ENCODE measurements at regions of chr1 and their contacts with region 1.

Region 1: GRCh38 chr1:89698624-89699023 is 65.7 kb downstream of the LRRC8C start:
- DNase-seq: no peak
- ATAC-seq: no peak
- H3K4me3 Mint-ChIP-seq: peak overlapping the region; percentile 17
- H3K27ac Mint-ChIP-seq: peak overlapping the region; percentile 94
- H3K4me1 Mint-ChIP-seq: peaks cover 89% of the 10 kb centered on the region
- H3K27me3 Mint-ChIP-seq: no peaks in the 10 kb centered on the region

Region 2: GRCh38 chr1:89675677-89676076 is 22.9 kb before region 1 on chr1:
- CTCF ChIA-PET with region 1: interaction called, 14 read pairs
- POLR2A ChIA-PET with region 1: no interaction called
- intact Hi-C with region 1: no loop called
- DNase-seq: no peak
- ATAC-seq: peak; percentile 75
- H3K4me3 Mint-ChIP-seq: no peak overlapping the region
- H3K27ac Mint-ChIP-seq: peak overlapping the region; percentile 84
- H3K4me1 Mint-ChIP-seq: peaks cover 78% of the 10 kb centered on the region
- H3K27me3 Mint-ChIP-seq: no peaks in the 10 kb centered on the region

Region 3: GRCh38 chr1:89711140-89711778 is 12.6 kb after region 1 on chr1:
- CTCF ChIA-PET with region 1: interaction called, 19 read pairs
- POLR2A ChIA-PET with region 1: no interaction called
- intact Hi-C with region 1: loop called in 1 of 2 experiments (anchors 2 kb)
- DNase-seq: no peak
- ATAC-seq: peak; percentile 44
- H3K4me3 Mint-ChIP-seq: no peak overlapping the region
- H3K27ac Mint-ChIP-seq: no peak overlapping the region
- H3K4me1 Mint-ChIP-seq: peaks cover 33% of the 10 kb centered on the region
- H3K27me3 Mint-ChIP-seq: no peaks in the 10 kb centered on the region

Region 4: DNA sequence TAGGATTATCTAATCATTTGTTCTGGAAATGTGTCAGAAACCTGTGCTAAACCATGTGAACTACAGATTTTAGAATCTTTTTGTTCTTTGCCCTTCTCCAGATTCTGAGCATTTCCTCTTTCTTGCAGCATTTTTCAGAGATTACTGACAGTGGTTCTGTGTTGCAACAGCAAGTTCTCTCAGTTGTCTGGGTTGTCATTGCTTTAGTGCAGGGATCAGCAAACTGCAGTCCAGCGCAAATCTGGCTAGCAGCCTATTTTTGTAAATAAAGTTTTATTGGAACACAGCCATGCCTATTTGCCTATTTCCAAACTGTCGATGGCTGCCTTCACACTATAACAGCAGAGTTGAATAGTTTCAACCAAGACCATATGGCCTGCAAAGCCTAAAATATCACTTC is 55.9 kb after region 1 on chr1:
- CTCF ChIA-PET with region 1: no interaction called
- POLR2A ChIA-PET with region 1: no interaction called
- intact Hi-C with region 1: no loop called
- DNase-seq: no peak
- ATAC-seq: peak; percentile 45
- H3K4me3 Mint-ChIP-seq: no peak overlapping the region
- H3K27ac Mint-ChIP-seq: peak overlapping the region; percentile 29
- H3K4me1 Mint-ChIP-seq: peaks cover 61% of the 10 kb centered on the region
- H3K27me3 Mint-ChIP-seq: no peaks in the 10 kb centered on the region